ENCODE measurements at regions of chr12 and their contacts with region 1.

Region 1: DNA sequence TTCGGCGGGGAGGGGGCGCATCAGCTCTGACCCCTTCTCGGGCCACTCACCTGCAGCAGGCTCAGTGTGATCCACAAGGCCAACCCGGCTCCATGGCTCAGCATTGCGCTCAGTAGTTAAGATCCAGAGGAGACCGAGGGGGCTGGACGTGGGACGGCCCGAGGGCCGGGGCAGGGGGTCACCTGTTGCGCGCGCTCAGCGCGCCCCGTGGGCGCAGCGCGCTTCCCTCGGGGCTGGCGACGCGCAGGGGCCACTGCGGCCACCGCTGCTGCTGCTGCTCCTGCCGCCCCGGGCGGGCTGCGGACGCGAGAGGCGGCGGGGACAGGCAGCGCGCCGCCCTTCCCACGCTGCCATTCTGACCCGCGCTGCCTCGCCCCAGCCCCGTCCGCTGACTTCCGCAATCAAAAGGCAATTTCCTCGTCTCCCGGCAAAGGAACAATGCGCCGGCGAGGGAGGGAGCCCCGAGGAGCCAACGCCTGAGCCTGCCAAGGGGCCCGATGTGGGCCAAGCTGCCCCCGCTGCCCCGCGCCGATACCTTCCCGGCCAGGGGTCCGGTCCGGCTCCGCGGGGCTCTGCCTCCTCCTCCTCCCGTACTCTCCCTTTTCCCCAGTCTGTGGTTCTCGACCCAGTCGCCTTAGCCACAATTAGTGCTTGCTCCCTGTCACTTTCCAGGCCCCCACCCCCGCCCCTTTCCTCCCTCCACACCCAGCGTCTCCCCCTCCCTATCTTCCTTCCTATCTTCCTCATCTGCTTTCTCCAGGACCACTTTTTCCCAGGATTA is 27.3 kb downstream of the PTPRB start:
- DNase-seq: peak; percentile 62
- H3K4me3 Mint-ChIP-seq: peak overlapping the region; percentile 62
- H3K27ac Mint-ChIP-seq: peak overlapping the region; percentile 40
- H3K4me1 Mint-ChIP-seq: peaks cover 46% of the 10 kb centered on the region
- H3K27me3 Mint-ChIP-seq: no peaks in the 10 kb centered on the region
- CTCF ChIP-seq: no peak

Region 2: GRCh38 chr12:70402600-70402999 is 207.3 kb before region 1 on chr12:
- CTCF ChIA-PET with region 1: no interaction called
- intact Hi-C with region 1: no loop called
- DNase-seq: no peak
- H3K4me3 Mint-ChIP-seq: no peak overlapping the region
- H3K27ac Mint-ChIP-seq: no peak overlapping the region
- H3K4me1 Mint-ChIP-seq: no peaks in the 10 kb centered on the region
- H3K27me3 Mint-ChIP-seq: no peaks in the 10 kb centered on the region
- CTCF ChIP-seq: no peak

Region 3: DNA sequence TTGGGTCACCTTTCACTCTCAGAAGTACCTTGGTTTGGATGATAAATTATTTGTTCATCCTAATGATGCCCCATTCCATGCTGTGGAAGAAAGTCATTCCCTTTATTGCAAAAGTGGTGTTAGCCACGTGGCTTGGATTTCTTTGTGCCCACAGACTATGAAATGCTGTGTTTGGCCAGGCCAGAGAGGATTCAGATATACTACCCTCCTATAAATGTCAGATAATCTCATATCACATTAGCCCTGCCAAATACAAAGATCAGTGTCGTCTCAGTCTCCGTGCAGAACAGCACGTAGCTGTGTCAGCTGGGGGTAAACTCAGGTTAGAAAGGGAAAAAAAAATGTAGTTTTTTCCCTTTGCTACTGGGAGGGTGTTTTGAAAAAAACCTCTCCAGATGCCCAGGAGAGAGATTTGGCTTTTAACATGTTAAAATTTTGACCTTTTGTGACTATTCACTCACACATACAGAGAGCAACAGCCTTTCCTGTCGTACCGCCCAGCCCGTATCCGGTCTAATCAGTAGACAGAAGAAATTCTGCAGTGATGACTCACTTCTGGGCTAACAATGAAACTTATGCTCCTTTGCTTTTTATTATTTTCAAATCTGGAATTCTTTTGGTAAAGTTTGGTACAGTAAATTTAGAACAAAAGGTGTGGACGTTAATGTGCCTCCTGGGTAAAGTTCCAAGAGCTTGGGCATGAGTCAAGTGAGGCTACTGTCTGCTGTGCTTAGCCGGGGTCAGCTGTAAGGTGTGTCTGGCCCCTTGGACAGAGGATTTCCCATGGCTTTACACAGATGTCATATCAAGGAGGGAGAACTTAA is 35.8 kb after region 1 on chr12:
- CTCF ChIA-PET with region 1: no interaction called
- intact Hi-C with region 1: loop called (anchors 5 kb)
- DNase-seq: peak; percentile 81
- H3K4me3 Mint-ChIP-seq: peak overlapping the region; percentile 39
- H3K27ac Mint-ChIP-seq: peak overlapping the region; percentile 91
- H3K4me1 Mint-ChIP-seq: peaks cover 65% of the 10 kb centered on the region
- H3K27me3 Mint-ChIP-seq: no peaks in the 10 kb centered on the region
- CTCF ChIP-seq: no peak

Measured in Calu3 (cell line).